Naive thymus-derived CD4-positive, alpha-beta T cell (primary cell): ENCODE measurements at regions of chr19 and their contacts with region 1.

Region 1: DNA sequence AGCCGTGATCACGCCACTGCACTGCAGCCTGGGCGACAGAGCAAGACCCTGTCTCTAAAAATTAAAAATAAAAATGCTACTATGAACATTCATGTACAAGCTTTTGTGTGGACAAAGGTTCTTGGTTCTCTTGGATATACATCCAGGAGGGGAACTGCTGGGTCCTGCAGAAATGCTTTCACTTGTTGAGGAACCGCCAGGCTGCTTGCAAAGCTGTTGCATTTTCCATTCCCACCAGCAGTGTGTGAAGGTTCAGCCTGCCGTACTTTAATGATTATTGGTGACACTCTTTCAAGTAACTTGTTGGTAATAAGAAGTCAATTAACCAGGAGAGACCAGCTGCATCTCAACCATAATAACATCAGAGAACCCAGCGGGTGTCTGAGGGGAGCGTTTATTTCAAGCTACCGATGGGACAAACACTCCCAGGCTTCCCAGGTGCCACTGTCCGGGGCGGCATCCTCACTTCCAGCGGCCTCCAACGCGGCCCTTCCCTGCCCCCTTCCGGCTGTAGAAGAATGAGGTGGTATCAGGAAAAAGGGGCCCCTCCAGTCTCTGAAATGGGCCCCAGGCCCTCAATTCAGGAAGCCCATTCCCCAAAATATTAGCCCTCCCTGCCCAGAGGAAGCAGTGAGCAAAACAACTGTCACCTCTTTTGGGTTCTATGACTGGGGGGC is 15.2 kb upstream of the PPP1R12C start:
- DNase-seq: no peak
- ATAC-seq: no peak
- H3K4me3 ChIP-seq: no peak overlapping the region
- H3K4me3 Mint-ChIP-seq: no peak overlapping the region
- H3K27ac ChIP-seq: no peak overlapping the region
- H3K27ac Mint-ChIP-seq: no peak overlapping the region
- H3K4me1 ChIP-seq: no peaks in the 10 kb centered on the region
- H3K4me1 Mint-ChIP-seq: no peaks in the 10 kb centered on the region
- H3K27me3 ChIP-seq: peaks cover 0 to 3% of the 10 kb centered on the region in 2 donors
- H3K27me3 Mint-ChIP-seq: peaks cover 35 to 45% (median 38%) of the 10 kb centered on the region in 5 donors

Region 2: DNA sequence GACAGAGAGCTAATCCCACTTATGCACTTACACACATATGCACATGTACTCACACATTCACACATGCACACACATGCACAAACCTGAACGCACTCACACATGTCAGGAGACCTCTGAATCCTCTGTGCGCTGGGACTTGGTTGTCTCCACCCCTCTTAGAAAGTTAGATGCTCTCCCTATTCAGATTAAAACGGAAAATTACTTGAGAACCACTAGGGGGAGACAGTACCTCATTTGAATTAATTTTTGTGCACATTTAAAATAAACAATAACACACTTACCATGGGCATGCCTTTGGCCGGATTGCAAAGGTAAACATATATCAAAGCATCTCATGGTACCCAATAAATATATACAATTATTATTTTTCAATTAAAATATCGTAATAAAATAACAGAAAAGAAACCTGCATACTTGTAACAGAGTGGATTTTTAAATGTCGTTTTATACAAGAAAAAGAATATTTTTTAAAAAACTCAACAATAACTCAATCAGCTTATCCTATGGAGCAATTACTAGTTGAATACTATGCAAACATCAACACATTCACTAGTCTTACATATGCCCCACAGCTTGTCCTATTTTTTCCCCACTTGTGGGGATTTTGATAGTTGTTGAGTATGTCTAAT is 479.3 kb before region 1 on chr19:
- CTCF ChIA-PET with region 1: no interaction called
- POLR2A ChIA-PET with region 1: no interaction called
- intact Hi-C with region 1: loop called in 1 of 2 experiments (anchors 10 kb)
- DNase-seq: peak in 1 of 9 donors; percentile 1
- ATAC-seq: peak; percentile 47
- H3K4me3 ChIP-seq: no peak overlapping the region
- H3K4me3 Mint-ChIP-seq: no peak overlapping the region
- H3K27ac ChIP-seq: no peak overlapping the region
- H3K27ac Mint-ChIP-seq: no peak overlapping the region
- H3K4me1 ChIP-seq: no peaks in the 10 kb centered on the region
- H3K4me1 Mint-ChIP-seq: no peaks in the 10 kb centered on the region
- H3K27me3 ChIP-seq: no peaks in the 10 kb centered on the region
- H3K27me3 Mint-ChIP-seq: peaks cover 0 to 30% (median 10%) of the 10 kb centered on the region in 5 donors

Region 3: GRCh38 chr19:55146078-55146704 is 13.6 kb after region 1 on chr19:
- CTCF ChIA-PET with region 1: no interaction called
- POLR2A ChIA-PET with region 1: no interaction called
- intact Hi-C with region 1: no loop called
- DNase-seq: no peak
- ATAC-seq: no peak
- H3K4me3 ChIP-seq: no peak overlapping the region
- H3K4me3 Mint-ChIP-seq: peak overlapping the region in 1 of 10 donors; percentile 28
- H3K27ac ChIP-seq: no peak overlapping the region
- H3K27ac Mint-ChIP-seq: no peak overlapping the region
- H3K4me1 ChIP-seq: no peaks in the 10 kb centered on the region
- H3K4me1 Mint-ChIP-seq: peaks cover under 1 to 14% (median 8%) of the 10 kb centered on the region in 7 donors
- H3K27me3 ChIP-seq: peaks cover 10 to 11% of the 10 kb centered on the region in 2 donors
- H3K27me3 Mint-ChIP-seq: peaks cover 49 to 65% (median 52%) of the 10 kb centered on the region in 5 donors